Activated CD4-positive, alpha-beta T cell treated with anti-CD3 and anti-CD28 coated beads, Interleukin-2, amount 10 ng/mL, durations not matched to agents 24 days and 14 days (primary cell): ENCODE measurements at regions of chr1 and their contacts with region 1.

Region 1: GRCh38 chr1:15028102-15028501 is 125.4 kb upstream of the TMEM51 start:
- DNase-seq: no peak
- H3K4me3 Mint-ChIP-seq: no peak overlapping the region
- H3K27ac Mint-ChIP-seq: no peak overlapping the region
- H3K4me1 Mint-ChIP-seq: no peaks in the 10 kb centered on the region
- H3K27me3 Mint-ChIP-seq: no peaks in the 10 kb centered on the region

Region 2: GRCh38 chr1:14923727-14924452 is 104.2 kb before region 1 on chr1:
- intact Hi-C with region 1: loop called (anchors 5 kb)
- DNase-seq: peak; percentile 83
- H3K4me3 Mint-ChIP-seq: peak overlapping the region; percentile 74
- H3K27ac Mint-ChIP-seq: peak overlapping the region; percentile 20
- H3K4me1 Mint-ChIP-seq: peaks cover 9% of the 10 kb centered on the region
- H3K27me3 Mint-ChIP-seq: peaks cover 46% of the 10 kb centered on the region

Region 3: DNA sequence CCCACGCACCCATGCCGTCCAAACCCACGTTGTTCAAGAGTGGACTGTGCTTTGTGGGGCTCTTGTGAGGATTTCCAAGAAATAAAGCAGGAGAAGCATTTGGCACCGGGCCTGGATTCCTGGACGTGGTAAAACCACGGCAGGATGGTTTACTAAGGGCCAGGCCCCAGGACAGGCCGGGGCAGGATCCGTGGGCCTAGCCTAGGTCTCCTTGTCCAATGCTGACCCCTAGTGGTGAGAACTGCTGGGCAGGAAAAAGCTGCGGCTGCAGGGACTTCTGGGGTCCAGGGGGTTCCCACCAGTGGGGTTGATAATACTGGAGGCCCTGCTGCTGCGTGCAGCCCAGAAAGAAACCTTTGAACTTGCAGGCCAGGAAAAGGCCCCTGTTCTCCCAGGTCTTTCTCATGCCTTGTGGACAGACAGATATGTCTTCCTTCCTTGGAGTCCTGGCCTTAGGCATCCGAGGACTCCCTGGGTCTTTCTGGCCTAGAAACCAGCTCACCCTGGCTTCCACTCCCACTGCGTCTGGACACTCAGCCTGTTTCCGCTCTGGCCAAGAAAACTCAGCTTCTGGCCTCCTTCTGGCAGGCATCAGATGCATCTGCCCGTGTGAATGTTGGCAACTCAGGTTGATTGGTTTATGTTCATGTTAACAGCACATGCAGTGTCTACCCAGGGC is 18.5 kb after region 1 on chr1:
- intact Hi-C with region 1: no loop called
- DNase-seq: peak; percentile 87
- H3K4me3 Mint-ChIP-seq: no peak overlapping the region
- H3K27ac Mint-ChIP-seq: no peak overlapping the region
- H3K4me1 Mint-ChIP-seq: no peaks in the 10 kb centered on the region
- H3K27me3 Mint-ChIP-seq: no peaks in the 10 kb centered on the region